SK-N-SH (cell line): ENCODE measurements at regions of chr4 and their contacts with region 1.

Region 1: DNA sequence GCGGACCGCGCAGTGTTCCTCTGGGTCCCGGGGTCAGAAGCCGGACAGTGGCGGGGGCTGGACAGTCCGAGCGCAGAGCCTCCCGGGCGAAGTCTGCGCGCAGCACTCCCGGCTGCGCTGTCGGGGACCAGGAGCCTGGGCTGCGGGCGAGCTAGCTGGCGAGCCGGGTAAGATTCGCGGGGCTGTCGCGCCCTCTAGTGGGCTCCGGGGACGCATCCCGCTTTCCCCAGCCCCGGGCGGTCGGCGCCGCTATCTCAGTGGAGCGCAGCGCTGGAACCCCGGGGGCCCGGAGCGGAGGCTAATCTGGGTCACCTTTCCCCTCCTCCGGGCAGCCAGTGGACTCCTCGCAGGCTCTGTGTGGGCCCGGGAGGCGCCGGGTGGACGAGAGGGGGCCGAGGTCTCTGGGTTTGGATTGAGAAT is 4.2 kb downstream of the PDGFRA start:
- DNase-seq: peak; percentile 91
- H3K4me3 ChIP-seq: peak overlapping the region; percentile 64 to 85
- H3K27ac ChIP-seq: peak overlapping the region; percentile 72 to 91
- H3K4me1 ChIP-seq: peaks cover 7 to 8% of the 10 kb centered on the region in 2 experiments; a peak in 3 of 4 replicates
- H3K27me3 ChIP-seq: no peaks in the 10 kb centered on the region
- CTCF ChIP-seq: peak; percentile 69
- EP300 ChIP-seq: 0 out of 4 replicates have a peak, but pooled peaks of 1 of the 2 experiments have one; percentile 20
- RAD21 ChIP-seq: peak; percentile 79

Region 2: GRCh38 chr4:53015681-53016080 is 1217.6 kb before region 1 on chr4:
- CTCF ChIA-PET with region 1: interaction called, 128 read pairs
- POLR2A ChIA-PET with region 1: interaction called, 7 read pairs
- DNase-seq: peak; percentile 36
- H3K4me3 ChIP-seq: no peak overlapping the region; a peak in 1 of 4 replicates
- H3K27ac ChIP-seq: peak overlapping the region in 1 of 2 experiments; percentile 100; a peak in 2 of 4 replicates
- H3K4me1 ChIP-seq: peaks cover 51 to 56% of the 10 kb centered on the region in 2 experiments
- H3K27me3 ChIP-seq: no peaks in the 10 kb centered on the region
- CTCF ChIP-seq: peak; percentile 87
- EP300 ChIP-seq: peak in 1 of 2 experiments; percentile 90; a peak in 2 of 4 replicates
- RAD21 ChIP-seq: peak; percentile 99

Region 3: GRCh38 chr4:53196882-53197771 is 1036.2 kb before region 1 on chr4:
- CTCF ChIA-PET with region 1: interaction called, 34 read pairs
- POLR2A ChIA-PET with region 1: interaction called, 7 read pairs
- DNase-seq: peak; percentile 24
- H3K4me3 ChIP-seq: peak overlapping the region; percentile 31 to 44; a peak in 3 of 4 replicates
- H3K27ac ChIP-seq: peak overlapping the region; percentile 65 to 99
- H3K4me1 ChIP-seq: peaks cover 12 to 36% of the 10 kb centered on the region in 2 experiments; a peak in 3 of 4 replicates
- H3K27me3 ChIP-seq: no peaks in the 10 kb centered on the region
- CTCF ChIP-seq: peak; percentile 89
- EP300 ChIP-seq: no peak
- RAD21 ChIP-seq: peak; percentile 91

Region 4: DNA sequence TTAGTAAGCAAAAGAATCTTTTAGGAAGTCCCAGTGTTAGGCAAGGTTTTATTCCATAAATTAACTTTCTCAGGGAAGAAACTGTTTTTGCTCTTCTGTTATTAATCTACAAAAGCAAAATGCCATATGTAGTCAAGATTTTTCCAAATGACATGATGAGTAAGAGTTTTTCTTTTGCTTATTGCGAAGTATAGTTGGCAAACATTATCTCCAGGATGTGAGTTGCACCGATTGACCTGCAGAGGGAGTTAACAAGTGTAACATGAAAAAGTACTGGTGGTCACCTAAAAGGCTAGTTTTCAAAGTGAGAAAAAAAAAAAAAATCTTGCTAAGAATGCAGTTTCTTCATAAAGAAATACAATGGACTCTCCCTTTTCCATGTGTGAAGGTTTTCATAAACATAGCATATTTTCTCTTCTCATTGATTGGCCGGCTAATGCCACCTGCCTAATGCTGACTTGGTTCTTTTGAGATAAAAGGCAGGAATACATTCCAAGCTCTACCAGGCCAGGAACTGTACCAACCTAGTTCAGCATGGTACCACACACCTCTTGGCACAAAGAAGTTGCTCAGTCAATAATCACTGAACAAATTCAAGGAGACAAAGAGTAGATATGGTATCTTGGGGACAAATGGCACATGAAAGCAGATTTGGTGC is 742.2 kb before region 1 on chr4:
- CTCF ChIA-PET with region 1: interaction called, 13 read pairs
- POLR2A ChIA-PET with region 1: no interaction called
- DNase-seq: peak; percentile 50
- H3K4me3 ChIP-seq: no peak overlapping the region
- H3K27ac ChIP-seq: peak overlapping the region in 1 of 2 experiments; percentile 74; a peak in 3 of 4 replicates
- H3K4me1 ChIP-seq: peaks cover 0 to 6% of the 10 kb centered on the region in 2 experiments; a peak in 2 of 4 replicates
- H3K27me3 ChIP-seq: no peaks in the 10 kb centered on the region
- CTCF ChIP-seq: peak; percentile 86
- EP300 ChIP-seq: no peak
- RAD21 ChIP-seq: peak; percentile 67

Region 5: DNA sequence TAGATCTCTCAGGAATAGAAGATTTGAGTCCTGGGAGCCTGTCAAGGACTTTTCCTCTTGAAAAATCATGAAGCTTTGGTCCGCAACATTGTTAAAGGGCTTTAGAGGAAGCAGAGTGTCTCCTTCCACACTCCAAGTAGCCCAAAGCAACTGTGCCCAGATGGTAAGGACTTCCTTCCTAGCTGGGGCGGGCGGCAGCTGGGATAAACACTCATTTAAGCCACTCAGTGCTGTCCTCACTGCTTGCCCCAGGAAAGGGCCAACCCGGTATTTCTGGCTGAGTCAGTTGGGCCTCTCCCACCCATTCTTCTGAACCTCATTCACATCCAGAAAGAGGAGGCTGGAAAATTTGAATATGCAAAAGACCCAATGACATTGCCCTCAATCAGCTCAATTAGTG is 313.2 kb before region 1 on chr4:
- CTCF ChIA-PET with region 1: interaction called, 152 read pairs
- POLR2A ChIA-PET with region 1: no interaction called
- DNase-seq: no peak
- H3K4me3 ChIP-seq: no peak overlapping the region
- H3K27ac ChIP-seq: no peak overlapping the region
- H3K4me1 ChIP-seq: peaks cover 1 to 11% of the 10 kb centered on the region in 2 experiments; a peak in 3 of 4 replicates
- H3K27me3 ChIP-seq: no peaks in the 10 kb centered on the region
- CTCF ChIP-seq: no peak
- EP300 ChIP-seq: no peak
- RAD21 ChIP-seq: no peak

Region 6: GRCh38 chr4:54058171-54058570 is 175.1 kb before region 1 on chr4:
- CTCF ChIA-PET with region 1: interaction called, 11 read pairs
- POLR2A ChIA-PET with region 1: no interaction called
- DNase-seq: no peak
- H3K4me3 ChIP-seq: no peak overlapping the region
- H3K27ac ChIP-seq: no peak overlapping the region
- H3K4me1 ChIP-seq: peaks cover 0 to 12% of the 10 kb centered on the region in 2 experiments; a peak in 3 of 4 replicates
- H3K27me3 ChIP-seq: no peaks in the 10 kb centered on the region
- CTCF ChIP-seq: no peak
- EP300 ChIP-seq: no peak
- RAD21 ChIP-seq: no peak

Region 7: DNA sequence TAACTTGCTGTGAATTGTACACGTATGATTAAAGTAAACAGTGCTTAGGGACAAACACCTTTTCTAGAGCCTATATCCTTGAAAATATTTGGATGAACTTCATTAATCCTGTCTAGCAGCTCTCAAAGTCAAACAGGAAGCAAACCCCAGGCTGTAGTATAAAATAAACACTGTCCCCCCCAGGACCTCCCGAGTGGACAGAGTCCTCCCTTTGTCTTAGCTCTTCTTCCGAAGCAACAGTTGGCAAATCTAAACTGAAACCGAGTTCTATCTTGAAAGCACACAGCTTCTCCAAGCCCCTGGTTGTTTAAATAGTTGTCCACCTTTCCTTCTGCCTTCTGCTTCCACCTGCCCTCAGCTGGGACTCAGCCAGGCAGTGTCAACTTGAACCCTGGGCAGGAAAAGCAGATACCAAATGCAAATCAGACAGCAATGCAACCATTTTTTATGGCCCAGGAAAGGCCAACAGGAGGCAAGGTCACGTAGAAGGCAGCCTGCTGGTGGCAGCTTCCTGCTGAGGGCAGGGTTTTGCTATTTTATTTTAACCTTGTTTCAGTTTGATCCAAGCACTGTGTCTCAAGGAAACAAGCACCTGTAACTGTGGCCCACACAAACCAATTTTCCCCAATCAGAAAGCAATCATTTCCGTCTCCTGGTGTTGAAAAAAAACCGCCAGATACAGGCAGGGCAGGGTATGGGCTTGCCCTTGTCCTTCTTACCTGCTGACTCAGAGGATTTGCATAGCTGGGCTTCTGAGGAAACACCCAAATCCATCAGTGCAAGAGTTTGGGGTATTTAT is 314.2 kb after region 1 on chr4:
- CTCF ChIA-PET with region 1: no interaction called
- POLR2A ChIA-PET with region 1: no interaction called
- DNase-seq: no peak
- H3K4me3 ChIP-seq: no peak overlapping the region
- H3K27ac ChIP-seq: no peak overlapping the region
- H3K4me1 ChIP-seq: peaks cover 3 to 4% of the 10 kb centered on the region in 2 experiments; a peak in 1 of 4 replicates
- H3K27me3 ChIP-seq: no peaks in the 10 kb centered on the region
- CTCF ChIP-seq: no peak
- EP300 ChIP-seq: no peak
- RAD21 ChIP-seq: no peak